ENCODE measurements at regions of chr1 and their contacts with region 1.

Region 1: GRCh38 chr1:9529190-9529589 is 10.1 kb upstream of the SLC25A33 start:
- DNase-seq: no peak
- H3K4me3 ChIP-seq: no peak overlapping the region
- H3K27ac ChIP-seq: no peak overlapping the region
- H3K4me1 ChIP-seq: no peaks in the 10 kb centered on the region
- H3K27me3 ChIP-seq: no peaks in the 10 kb centered on the region
- CTCF ChIP-seq: no peak

Region 2: DNA sequence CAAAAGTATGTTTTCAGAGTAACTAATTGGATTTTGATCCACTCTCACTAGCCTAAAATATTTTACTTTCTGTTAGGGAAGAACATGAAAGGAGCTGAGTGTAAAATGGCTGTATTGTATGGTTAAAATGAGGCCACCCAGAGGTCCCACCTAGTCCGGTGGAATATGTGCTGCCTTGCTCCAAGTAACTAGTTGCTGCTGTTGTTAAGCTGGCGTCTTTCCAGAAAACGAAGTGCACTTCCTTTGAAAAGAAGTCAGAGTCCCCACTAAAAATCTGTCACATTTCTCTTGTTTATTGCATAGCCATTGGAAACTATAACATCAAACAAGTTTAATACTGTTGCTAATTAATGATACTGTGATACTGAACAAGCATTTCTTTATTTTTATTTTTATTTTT is 13.2 kb after region 1 on chr1:
- CTCF ChIA-PET with region 1: no interaction called
- POLR2A ChIA-PET with region 1: interaction called, 10 read pairs
- intact Hi-C with region 1: no loop called
- DNase-seq: peak; percentile 80
- H3K4me3 ChIP-seq: peak overlapping the region; percentile 9
- H3K27ac ChIP-seq: peak overlapping the region; percentile 69
- H3K4me1 ChIP-seq: peaks cover 18% of the 10 kb centered on the region
- H3K27me3 ChIP-seq: no peaks in the 10 kb centered on the region
- CTCF ChIP-seq: no peak